ENCODE measurements at regions of chr1 and their contacts with region 1.

Region 1: GRCh38 chr1:100037927-100038659 is 68.3 kb downstream of the SLC35A3 start:
- DNase-seq: peak; percentile 91
- H3K4me3 Mint-ChIP-seq: peak overlapping the region; percentile 90
- H3K27ac Mint-ChIP-seq: peak overlapping the region; percentile 99
- H3K4me1 Mint-ChIP-seq: peaks cover 61% of the 10 kb centered on the region
- H3K27me3 Mint-ChIP-seq: no peaks in the 10 kb centered on the region

Region 2: DNA sequence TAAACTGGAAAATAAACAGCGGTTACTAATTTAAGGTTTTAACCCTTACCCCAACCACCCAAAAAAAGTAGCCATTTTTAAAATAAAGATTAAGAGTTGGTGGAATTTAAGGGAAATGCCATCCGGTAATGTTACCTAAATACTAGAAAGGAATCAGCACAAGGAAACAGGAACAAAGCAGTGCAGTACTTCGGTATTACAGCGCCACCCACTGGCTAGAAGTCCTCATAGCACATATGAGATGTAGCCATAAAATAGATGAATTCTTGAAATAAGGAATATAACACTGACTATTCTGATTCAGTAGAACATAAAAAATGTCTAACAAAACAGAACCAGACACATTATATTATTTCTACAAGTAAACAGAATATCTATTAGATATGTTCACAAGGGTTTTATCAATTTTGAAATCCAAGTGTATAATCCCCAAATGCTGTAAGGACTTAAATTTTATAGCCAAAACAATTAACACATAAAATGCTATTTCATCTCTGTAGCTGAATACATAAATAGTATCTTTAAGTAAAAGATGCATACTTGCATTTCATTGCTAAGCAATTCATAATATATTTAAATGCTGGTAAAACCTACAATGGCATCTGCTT is 330.5 kb before region 1 on chr1:
- CTCF ChIA-PET with region 1: no interaction called
- POLR2A ChIA-PET with region 1: no interaction called
- DNase-seq: peak; percentile 71
- H3K4me3 Mint-ChIP-seq: no peak overlapping the region
- H3K27ac Mint-ChIP-seq: no peak overlapping the region
- H3K4me1 Mint-ChIP-seq: peaks cover 22% of the 10 kb centered on the region
- H3K27me3 Mint-ChIP-seq: no peaks in the 10 kb centered on the region

Region 3: DNA sequence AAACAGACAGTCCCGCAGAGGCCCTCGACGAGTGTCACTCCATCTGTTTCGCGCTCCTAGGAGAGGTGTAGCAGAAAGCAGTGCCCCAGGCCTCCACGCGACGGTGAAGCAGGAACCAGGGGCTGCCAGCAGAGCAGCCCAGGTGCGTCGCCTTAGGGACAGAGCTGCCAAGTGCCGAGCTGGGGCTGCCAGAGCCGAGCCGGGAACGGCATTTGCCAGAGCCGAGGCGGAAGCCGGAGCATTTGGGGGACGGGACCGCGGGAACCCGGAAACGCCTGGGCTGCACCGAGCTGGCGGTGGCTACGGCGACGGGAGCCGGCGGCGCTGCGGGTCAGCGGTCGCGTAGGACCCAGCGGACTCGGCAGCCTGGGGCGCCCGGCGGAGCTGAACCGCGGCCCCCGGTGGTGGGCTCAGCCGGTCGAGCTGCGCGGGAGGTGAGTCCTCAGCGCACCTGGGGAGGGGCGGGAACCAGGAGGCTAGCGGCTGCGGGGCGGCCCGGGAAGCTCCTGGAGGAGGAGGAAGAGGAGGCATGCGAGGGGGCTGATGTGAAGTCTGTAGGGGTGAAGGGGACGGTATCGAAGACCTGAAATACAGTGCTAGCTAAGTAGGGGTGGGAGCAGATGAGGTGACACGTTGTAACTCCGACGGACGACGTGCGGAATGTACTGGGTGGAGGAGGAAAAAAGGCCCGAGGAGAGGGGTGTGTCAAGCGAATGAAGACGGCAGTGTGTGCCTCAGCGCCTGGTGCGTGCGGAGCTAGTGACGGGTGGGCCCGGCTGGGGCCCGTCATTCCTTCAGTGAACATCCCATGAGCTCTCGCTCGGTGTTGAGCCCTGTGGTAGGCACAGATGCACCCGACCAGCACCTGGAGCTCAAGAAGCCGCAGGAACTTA is 68.1 kb before region 1 on chr1 and contains the start of gene SLC35A3:
- CTCF ChIA-PET with region 1: interaction called, 4 read pairs
- POLR2A ChIA-PET with region 1: interaction called, 46 read pairs
- DNase-seq: peak; percentile 79
- H3K4me3 Mint-ChIP-seq: peak within 1 kb of the TSS; percentile 96
- H3K27ac Mint-ChIP-seq: peak within 1 kb of the TSS; percentile 86
- H3K4me1 Mint-ChIP-seq: peaks cover 30% of the 10 kb centered on the region
- H3K27me3 Mint-ChIP-seq: no peaks in the 10 kb centered on the region
- total RNA-seq, gene SLC35A3: 16.4 to 17.7 TPM

Region 4: GRCh38 chr1:100050139-100050538 is 12.0 kb after region 1 on chr1:
- CTCF ChIA-PET with region 1: no interaction called
- POLR2A ChIA-PET with region 1: interaction called, 29 read pairs
- DNase-seq: no peak
- H3K4me3 Mint-ChIP-seq: no peak overlapping the region
- H3K27ac Mint-ChIP-seq: no peak overlapping the region
- H3K4me1 Mint-ChIP-seq: peaks cover 54% of the 10 kb centered on the region
- H3K27me3 Mint-ChIP-seq: no peaks in the 10 kb centered on the region

Region 5: GRCh38 chr1:100132566-100133477 is 94.7 kb after region 1 on chr1 and contains the starts of genes SASS6 and TRMT13:
- CTCF ChIA-PET with region 1: interaction called, 4 read pairs
- POLR2A ChIA-PET with region 1: interaction called, 19 read pairs
- DNase-seq: peak; percentile 97
- H3K4me3 Mint-ChIP-seq: peak within 1 kb of the TSS; percentile 96
- H3K27ac Mint-ChIP-seq: peak within 1 kb of the TSS; percentile 90
- H3K4me1 Mint-ChIP-seq: peaks cover 50% of the 10 kb centered on the region
- H3K27me3 Mint-ChIP-seq: no peaks in the 10 kb centered on the region
- total RNA-seq, gene SASS6: 13.2 to 13.3 TPM
- total RNA-seq, gene TRMT13: 13.9 to 15.4 TPM

Region 6: DNA sequence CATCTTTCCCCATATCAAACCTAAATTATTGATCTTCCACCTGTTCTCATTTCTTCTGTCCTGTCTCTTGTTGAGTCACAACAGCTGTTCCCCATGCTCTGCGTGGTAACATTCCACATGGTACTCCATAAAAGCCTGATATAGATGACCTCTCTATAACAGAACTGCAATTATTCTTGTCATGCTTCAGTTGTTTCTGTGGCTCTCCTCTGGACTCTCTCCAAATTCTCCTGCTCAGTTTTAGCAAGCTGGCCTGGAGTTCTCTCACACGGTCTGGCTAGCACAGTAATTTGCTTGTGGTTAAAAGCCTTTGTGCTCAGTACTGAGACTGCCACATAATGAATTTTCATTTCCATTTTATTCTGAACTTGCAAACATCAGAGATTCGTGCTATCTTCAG is 150.5 kb after region 1 on chr1:
- CTCF ChIA-PET with region 1: no interaction called
- POLR2A ChIA-PET with region 1: no interaction called
- DNase-seq: no peak
- H3K4me3 Mint-ChIP-seq: no peak overlapping the region
- H3K27ac Mint-ChIP-seq: no peak overlapping the region
- H3K4me1 Mint-ChIP-seq: no peaks in the 10 kb centered on the region
- H3K27me3 Mint-ChIP-seq: no peaks in the 10 kb centered on the region

Measured in activated CD4-positive, alpha-beta memory T cell treated with anti-CD3 and anti-CD28 coated beads, Interleukin-2, amount 10 ng/mL, durations not matched to agents 7 days and 5 days (primary cell).